ENCODE measurements at regions of chr9 and their contacts with region 1.

Region 1: GRCh38 chr9:36765468-36766341 is 193.0 kb downstream of the MELK start:
- DNase-seq: peak; percentile 86
- H3K4me3 ChIP-seq: peak overlapping the region in 3 of 4 donors; percentile 26 to 54 (median 33)
- H3K27ac ChIP-seq: peak overlapping the region in 1 of 4 donors; percentile 8
- H3K4me1 ChIP-seq: peaks cover 0 to 10% (median 3%) of the 10 kb centered on the region in 4 donors
- H3K27me3 ChIP-seq: peaks cover 10% of the 10 kb centered on the region
- CTCF ChIP-seq: no peak
- EP300 ChIP-seq: no peak
- POLR2A ChIP-seq: no peak

Region 2: DNA sequence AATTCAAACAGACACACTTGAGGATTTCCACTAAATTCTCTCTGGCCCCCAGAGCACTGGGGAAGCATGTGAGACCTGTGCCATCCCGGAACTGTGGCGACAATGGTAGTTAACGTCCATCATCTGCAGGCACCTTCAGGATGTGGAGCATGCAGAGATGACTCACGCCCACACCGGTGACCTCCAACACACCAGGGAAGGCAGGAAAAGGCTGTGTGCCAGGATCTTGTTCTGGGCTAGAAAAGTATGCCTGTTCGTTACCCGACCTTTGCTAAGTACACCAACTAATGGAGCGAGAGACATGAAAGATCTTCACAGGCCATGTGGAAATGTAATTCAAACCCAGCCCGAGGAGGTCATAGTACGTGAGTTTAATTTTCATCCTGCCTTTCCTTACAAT is 15.8 kb after region 1 on chr9:
- in situ Hi-C with region 1: no loop called
- intact Hi-C with region 1: no loop called
- DNase-seq: no peak
- H3K4me3 ChIP-seq: no peak overlapping the region
- H3K27ac ChIP-seq: no peak overlapping the region
- H3K4me1 ChIP-seq: no peaks in the 10 kb centered on the region
- H3K27me3 ChIP-seq: peaks cover 57% of the 10 kb centered on the region
- CTCF ChIP-seq: no peak
- EP300 ChIP-seq: no peak
- POLR2A ChIP-seq: no peak

Region 3: GRCh38 chr9:36828611-36829013 is 62.9 kb after region 1 on chr9:
- in situ Hi-C with region 1: loop called in 1 of 4 experiments (anchors 10 kb)
- intact Hi-C with region 1: no loop called
- DNase-seq: no peak
- H3K4me3 ChIP-seq: no peak overlapping the region
- H3K27ac ChIP-seq: no peak overlapping the region
- H3K4me1 ChIP-seq: no peaks in the 10 kb centered on the region
- H3K27me3 ChIP-seq: no peaks in the 10 kb centered on the region
- CTCF ChIP-seq: no peak
- EP300 ChIP-seq: no peak
- POLR2A ChIP-seq: no peak

Measured in transverse colon (tissue), 4 donors.